ENCODE measurements at regions of chr1 and their contacts with region 1.

Region 1: DNA sequence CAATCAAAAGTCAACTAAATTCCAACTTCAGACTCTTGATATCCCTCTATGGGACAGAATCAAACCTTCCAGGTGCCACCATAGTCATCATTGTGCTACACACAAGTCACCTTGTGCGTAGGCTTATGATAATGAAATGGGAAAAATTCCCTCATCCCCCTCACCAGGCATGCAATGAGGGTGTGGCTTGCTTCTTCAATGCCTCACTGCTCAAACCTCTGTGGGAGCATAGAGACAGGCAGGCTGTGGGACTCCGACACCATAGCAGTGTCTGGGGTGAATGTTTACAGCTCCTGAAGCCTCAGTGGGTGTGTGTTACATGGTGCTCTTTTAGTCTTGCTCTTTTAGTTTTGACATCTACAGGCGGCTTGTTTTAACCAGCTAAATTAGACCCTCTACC is 42.4 kb downstream of the ZNF697 start:
- DNase-seq: no peak
- H3K4me3 Mint-ChIP-seq: no peak overlapping the region
- H3K27ac Mint-ChIP-seq: no peak overlapping the region
- H3K4me1 Mint-ChIP-seq: no peaks in the 10 kb centered on the region
- H3K27me3 Mint-ChIP-seq: peaks cover 9% of the 10 kb centered on the region

Region 2: DNA sequence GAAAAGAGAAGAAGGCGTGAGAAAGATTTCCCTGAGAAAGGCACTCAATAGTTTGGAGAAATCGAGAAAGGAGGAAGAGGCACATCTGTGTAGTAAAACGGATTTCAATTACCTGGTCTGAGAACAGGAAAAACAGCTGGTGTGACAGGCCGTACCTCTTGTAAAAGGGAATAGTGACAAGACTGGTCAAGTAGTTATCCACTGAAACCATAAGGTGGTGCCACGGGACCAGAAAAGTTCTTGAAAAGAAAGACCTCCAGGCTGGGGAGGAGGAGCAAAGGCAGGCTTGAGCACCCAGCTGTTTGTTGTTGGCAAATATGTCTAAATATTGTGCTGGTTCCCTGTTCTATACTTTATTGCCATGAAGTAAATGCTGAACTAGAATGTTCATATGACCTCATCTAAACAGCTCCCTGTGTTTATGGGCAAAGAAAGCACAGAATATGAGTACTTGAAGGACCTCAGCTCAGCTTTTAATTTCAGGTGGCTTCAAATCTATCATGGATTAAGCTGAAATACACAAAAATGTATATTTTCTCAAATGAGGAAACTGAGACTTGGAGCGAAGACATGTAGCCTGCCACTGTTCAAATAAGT is 233.1 kb before region 1 on chr1:
- CTCF ChIA-PET with region 1: no interaction called
- intact Hi-C with region 1: loop called (anchors 5 kb)
- DNase-seq: peak; percentile 10
- H3K4me3 Mint-ChIP-seq: no peak overlapping the region
- H3K27ac Mint-ChIP-seq: no peak overlapping the region
- H3K4me1 Mint-ChIP-seq: peaks cover 14% of the 10 kb centered on the region
- H3K27me3 Mint-ChIP-seq: peaks cover 20% of the 10 kb centered on the region

Measured in activated naive CD4-positive, alpha-beta T cell treated with anti-CD3 and anti-CD28 coated beads for 36 hours (primary cell).